Stomach (tissue), 19 donors: ENCODE measurements at regions of chr14 and their contacts with region 1.

Region 1: GRCh38 chr14:77314043-77314442 is 6.6 kb downstream of the POMT2 start:
- DNase-seq: no peak
- H3K4me3 ChIP-seq: no peak overlapping the region
- H3K27ac ChIP-seq: peak overlapping the region in 4 of 5 donors; percentile 43 to 56 (median 44)
- H3K4me1 ChIP-seq: peaks cover 12 to 55% (median 31%) of the 10 kb centered on the region in 4 donors
- H3K27me3 ChIP-seq: no peaks in the 10 kb centered on the region
- CTCF ChIP-seq: no peak
- EP300 ChIP-seq: no peak
- POLR2A ChIP-seq: no peak

Region 2: GRCh38 chr14:76876076-76876475 is 438.0 kb before region 1 on chr14:
- intact Hi-C with region 1: loop called (anchors 10 kb)
- DNase-seq: peak; percentile 67 to 88
- H3K4me3 ChIP-seq: no peak overlapping the region
- H3K27ac ChIP-seq: no peak overlapping the region
- H3K4me1 ChIP-seq: no peaks in the 10 kb centered on the region
- H3K27me3 ChIP-seq: no peaks in the 10 kb centered on the region
- CTCF ChIP-seq: peak in 5 of 7 experiments; percentile 83 to 97 (median 93)
- EP300 ChIP-seq: no peak
- POLR2A ChIP-seq: no peak

Region 3: DNA sequence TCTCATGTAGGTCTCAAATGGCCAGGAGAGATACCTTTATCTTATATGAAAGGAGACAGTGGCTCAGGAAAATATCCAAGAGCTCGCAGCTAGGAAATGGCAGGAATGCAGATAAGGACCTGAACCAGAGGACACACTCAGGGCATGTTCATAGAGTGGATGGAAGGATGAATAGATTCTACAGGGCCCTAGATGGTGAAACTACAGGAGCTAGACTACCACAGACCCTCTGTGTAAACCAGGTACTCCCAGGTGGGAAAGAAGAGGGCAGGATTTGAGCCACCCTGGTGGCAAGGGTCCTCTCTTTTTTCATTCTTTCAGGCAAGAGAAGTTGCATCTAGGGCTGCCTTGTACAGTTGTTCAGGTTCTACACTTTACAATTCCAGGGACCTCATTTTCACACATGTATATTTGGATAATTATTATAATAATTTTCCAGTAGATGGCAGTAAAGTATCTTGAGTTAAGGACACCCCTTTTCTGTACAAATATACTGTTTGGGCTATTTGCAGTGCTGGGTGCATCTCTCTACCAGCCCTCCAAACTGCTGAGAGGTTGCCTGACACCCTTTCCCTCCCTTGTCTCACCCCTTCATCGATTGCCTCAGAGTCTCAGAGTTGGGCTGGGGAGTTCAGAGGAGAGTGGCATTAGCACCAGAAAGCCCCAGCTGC is 162.0 kb before region 1 on chr14:
- intact Hi-C with region 1: loop called (anchors 10 kb)
- DNase-seq: peak in 1 of 2 donors; percentile 26
- H3K4me3 ChIP-seq: no peak overlapping the region
- H3K27ac ChIP-seq: no peak overlapping the region
- H3K4me1 ChIP-seq: no peaks in the 10 kb centered on the region
- H3K27me3 ChIP-seq: peaks cover 0 to 62% (median 27%) of the 10 kb centered on the region in 3 donors
- CTCF ChIP-seq: no peak
- EP300 ChIP-seq: no peak
- POLR2A ChIP-seq: no peak

Region 4: DNA sequence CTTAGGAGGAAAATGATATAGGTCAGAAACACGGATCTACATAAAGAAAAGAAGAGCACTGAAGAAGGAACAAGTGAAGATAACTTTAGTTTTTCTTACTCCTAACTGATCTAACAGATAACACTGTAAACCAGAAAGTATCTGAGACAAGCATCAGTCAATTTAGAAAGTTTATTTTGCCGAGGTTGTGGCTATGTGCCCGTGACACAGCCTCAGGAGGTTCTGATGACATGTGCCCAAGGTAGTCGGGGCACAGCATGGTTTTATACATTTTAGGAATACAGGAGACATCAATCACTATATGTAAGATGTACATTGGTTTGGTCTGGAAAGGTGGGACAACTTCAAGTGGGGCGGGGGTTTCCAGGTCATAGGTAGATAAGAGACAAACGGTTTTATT is 86.2 kb after region 1 on chr14:
- intact Hi-C with region 1: no loop called
- DNase-seq: no peak
- H3K4me3 ChIP-seq: no peak overlapping the region
- H3K27ac ChIP-seq: no peak overlapping the region
- H3K4me1 ChIP-seq: no peaks in the 10 kb centered on the region
- H3K27me3 ChIP-seq: no peaks in the 10 kb centered on the region
- CTCF ChIP-seq: no peak
- EP300 ChIP-seq: no peak
- POLR2A ChIP-seq: no peak